Caco-2 (cell line): ENCODE measurements at regions of chr3 and their contacts with region 1.

Region 1: GRCh38 chr3:122564155-122564912 is at the starts of genes DTX3L and PARP9:
- DNase-seq: peak; percentile 82 to 85
- H3K4me3 ChIP-seq: peak within 1 kb of the TSS; percentile 65
- H3K4me3 Mint-ChIP-seq: peak within 1 kb of the TSS; percentile 83
- H3K27ac Mint-ChIP-seq: peak within 1 kb of the TSS; percentile 86
- H3K4me1 ChIP-seq: 0 out of 2 replicates have a peak, but pooled peaks cover 3% of the 10 kb centered on the region
- H3K4me1 Mint-ChIP-seq: peaks cover 8% of the 10 kb centered on the region
- H3K27me3 ChIP-seq: no peaks in the 10 kb centered on the region
- H3K27me3 Mint-ChIP-seq: no peaks in the 10 kb centered on the region
- CTCF ChIP-seq: no peak
- total RNA-seq, gene DTX3L: 17.3 and 21.9 TPM in 2 replicates
- total RNA-seq, gene PARP9: 15.8 and 16.1 TPM in 2 replicates

Region 2: DNA sequence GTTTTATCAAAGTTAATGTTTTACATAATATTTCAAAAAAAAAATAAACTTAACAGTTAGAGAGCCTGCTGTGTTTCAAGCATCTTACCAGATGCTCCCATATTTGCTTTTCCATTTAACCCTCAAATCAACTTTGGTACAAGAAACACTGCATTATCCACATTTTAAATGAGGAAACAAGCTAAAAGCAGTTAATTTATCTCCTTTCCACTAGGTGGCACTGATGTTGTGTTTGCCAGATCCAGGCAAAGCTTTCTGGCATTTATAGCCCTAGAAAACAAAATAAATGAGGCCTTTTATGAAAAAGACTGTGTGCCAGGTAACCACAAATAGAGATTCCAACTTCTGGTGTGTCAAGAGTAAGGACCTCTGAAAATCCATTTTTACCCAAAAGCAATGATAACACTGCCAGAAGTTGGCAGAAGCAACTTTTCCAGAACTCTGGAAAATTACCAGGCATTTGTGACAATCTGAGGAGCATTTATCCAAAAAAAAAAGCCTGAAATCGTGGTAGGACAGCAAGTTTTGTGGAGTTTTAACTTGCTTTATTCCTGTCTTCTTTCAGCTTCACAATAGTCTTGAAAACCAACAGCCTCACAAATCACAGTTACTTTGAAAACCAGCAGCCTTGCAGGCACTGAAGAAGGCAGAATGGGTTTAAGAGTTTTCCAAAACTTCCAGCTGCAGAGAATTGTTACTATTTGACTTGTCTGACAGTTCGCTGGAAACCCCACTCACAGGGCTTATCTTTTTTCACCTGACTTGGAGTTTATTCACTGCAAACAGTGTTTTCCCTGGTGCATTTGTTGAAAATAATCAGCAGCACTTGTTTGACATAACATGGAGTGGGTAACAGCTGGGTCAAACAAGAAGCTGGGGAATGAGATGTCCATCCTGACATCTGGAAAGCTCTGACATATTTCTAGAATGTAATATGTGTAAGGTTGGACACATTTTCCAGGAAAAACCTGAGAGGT is 171.2 kb before region 1 on chr3:
- CTCF ChIA-PET with region 1: no interaction called
- POLR2A ChIA-PET with region 1: no interaction called
- intact Hi-C with region 1: loop called (anchors 5 kb)
- DNase-seq: peak in 1 of 2 experiments; percentile 39
- H3K4me3 ChIP-seq: no peak overlapping the region
- H3K4me3 Mint-ChIP-seq: no peak overlapping the region
- H3K27ac Mint-ChIP-seq: no peak overlapping the region
- H3K4me1 ChIP-seq: 0 out of 2 replicates have a peak, but pooled peaks cover 4% of the 10 kb centered on the region
- H3K4me1 Mint-ChIP-seq: no peaks in the 10 kb centered on the region
- H3K27me3 ChIP-seq: no peaks in the 10 kb centered on the region
- H3K27me3 Mint-ChIP-seq: no peaks in the 10 kb centered on the region
- CTCF ChIP-seq: peak; percentile 54 to 73

Region 3: DNA sequence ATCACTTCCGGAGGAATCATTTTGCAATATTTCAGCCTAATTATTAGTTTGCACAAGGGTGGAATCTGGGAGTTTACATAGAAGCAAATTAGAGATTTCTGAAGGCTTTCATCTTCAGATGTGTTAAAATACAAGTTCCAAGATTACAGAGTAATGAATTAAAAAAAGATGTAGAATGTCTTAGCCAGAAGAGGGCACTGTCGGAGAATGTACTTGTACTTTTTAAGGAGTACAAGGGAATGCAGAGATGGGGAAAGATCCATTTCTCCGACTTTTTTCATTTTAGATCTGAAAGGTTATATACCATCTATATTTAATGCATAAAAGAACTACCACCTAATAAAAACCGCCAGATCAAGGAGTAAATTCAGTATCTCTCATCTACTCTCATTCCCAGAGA is 105.3 kb before region 1 on chr3:
- CTCF ChIA-PET with region 1: no interaction called
- POLR2A ChIA-PET with region 1: no interaction called
- intact Hi-C with region 1: loop called (anchors 5 kb)
- DNase-seq: peak in 1 of 2 experiments; percentile 29
- H3K4me3 ChIP-seq: no peak overlapping the region
- H3K4me3 Mint-ChIP-seq: no peak overlapping the region
- H3K27ac Mint-ChIP-seq: no peak overlapping the region
- H3K4me1 ChIP-seq: peaks cover 10% of the 10 kb centered on the region; the same call in 1 of the 2 replicates
- H3K4me1 Mint-ChIP-seq: peaks cover 13% of the 10 kb centered on the region
- H3K27me3 ChIP-seq: no peaks in the 10 kb centered on the region
- H3K27me3 Mint-ChIP-seq: no peaks in the 10 kb centered on the region
- CTCF ChIP-seq: peak; percentile 39 to 42

Region 4: DNA sequence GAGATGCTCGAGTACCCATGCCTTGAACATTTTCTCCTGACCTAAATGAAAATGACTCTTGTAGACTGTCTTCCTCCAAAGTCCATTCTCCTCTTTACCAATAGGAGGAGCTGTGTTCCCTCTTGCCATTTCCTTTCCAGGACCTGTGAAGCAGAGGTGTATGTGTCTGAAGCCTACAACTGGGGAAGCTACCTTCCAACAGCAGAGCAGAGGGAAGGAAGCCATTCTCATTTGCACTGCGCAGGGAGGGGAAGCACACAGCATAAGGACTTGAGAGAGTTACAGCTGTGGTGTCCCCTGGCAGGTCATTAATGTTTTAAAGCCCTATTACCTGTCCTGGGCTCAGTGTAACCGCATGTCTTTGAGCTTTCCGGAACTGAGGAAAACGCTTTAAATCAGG is 190.6 kb after region 1 on chr3:
- CTCF ChIA-PET with region 1: no interaction called
- POLR2A ChIA-PET with region 1: no interaction called
- intact Hi-C with region 1: loop called (anchors 5 kb)
- DNase-seq: peak; percentile 71 to 76
- H3K4me3 ChIP-seq: no peak overlapping the region
- H3K4me3 Mint-ChIP-seq: peak overlapping the region; percentile 43
- H3K27ac Mint-ChIP-seq: peak overlapping the region; percentile 93
- H3K4me1 ChIP-seq: peaks cover 43% of the 10 kb centered on the region
- H3K4me1 Mint-ChIP-seq: peaks cover 35% of the 10 kb centered on the region
- H3K27me3 ChIP-seq: no peaks in the 10 kb centered on the region
- H3K27me3 Mint-ChIP-seq: no peaks in the 10 kb centered on the region
- CTCF ChIP-seq: peak; percentile 75 to 82

Region 5: DNA sequence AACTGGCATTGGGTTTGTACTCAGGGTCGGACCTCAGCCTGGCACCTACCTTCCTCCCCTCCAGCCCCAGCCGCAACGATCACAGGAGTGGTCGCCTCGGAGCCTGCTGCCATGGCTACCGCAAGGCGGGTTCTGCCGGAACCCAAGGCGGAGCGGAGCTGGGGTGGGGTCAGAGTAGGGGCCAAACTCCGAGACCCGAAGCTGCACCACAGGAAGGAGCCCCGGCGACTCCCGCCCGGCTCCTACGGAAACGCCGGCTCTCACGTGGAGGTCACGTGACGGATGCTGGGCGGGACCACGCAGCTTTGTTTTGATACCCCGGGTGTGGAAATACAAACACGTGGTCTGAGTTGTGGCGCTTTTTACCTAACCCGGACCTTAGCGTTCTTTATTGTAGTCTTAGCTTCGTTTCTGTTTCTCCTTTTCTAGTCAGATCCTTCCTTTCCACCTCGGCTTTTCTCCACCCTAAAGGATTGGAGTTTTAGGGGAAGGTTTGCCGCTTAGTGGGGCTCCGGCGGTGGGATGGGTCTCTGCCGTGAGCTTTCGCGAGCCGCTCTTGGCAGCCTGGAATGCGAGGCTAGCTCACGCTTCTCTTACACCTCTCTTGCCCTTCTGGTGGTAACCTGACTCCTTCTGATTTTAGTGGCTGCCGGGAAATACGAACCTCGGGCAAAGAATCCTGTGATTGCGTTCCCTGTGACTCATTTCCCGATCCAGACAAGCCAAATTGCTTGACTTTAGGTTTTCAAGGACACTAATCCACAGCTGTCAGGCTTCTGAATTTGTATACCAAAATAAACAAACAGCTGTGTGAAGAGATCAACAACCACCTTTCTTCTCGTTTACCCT is 229.5 kb after region 1 on chr3 and contains the start of gene HSPBAP1:
- CTCF ChIA-PET with region 1: no interaction called
- POLR2A ChIA-PET with region 1: no interaction called
- intact Hi-C with region 1: loop called (anchors 10 kb)
- DNase-seq: peak; percentile 91 to 92
- H3K4me3 ChIP-seq: peak within 1 kb of the TSS; percentile 95
- H3K4me3 Mint-ChIP-seq: no peak within 1 kb of the TSS
- H3K27ac Mint-ChIP-seq: peak within 1 kb of the TSS; percentile 72
- H3K4me1 ChIP-seq: peaks cover 15% of the 10 kb centered on the region
- H3K4me1 Mint-ChIP-seq: peaks cover 8% of the 10 kb centered on the region
- H3K27me3 ChIP-seq: no peaks in the 10 kb centered on the region
- H3K27me3 Mint-ChIP-seq: no peaks in the 10 kb centered on the region
- CTCF ChIP-seq: peak in 1 of 2 experiments; percentile 4
- total RNA-seq, gene HSPBAP1: 9.9 and 13.1 TPM in 2 replicates